Mucosa of descending colon (tissue), 3 donors: ENCODE measurements at regions of chr1 and their contacts with region 1.

Region 1: GRCh38 chr1:153985941-153986761 is at the start of gene RAB13:
- DNase-seq: peak; percentile 86 to 92 (median 90)
- ATAC-seq: peak; percentile 84
- H3K4me3 ChIP-seq: no peak within 1 kb of the TSS
- H3K4me1 ChIP-seq: peaks cover 7% of the 10 kb centered on the region
- CTCF ChIP-seq: no peak
- total RNA-seq, gene RAB13: 55.4 to 82.5 (median 77.5) TPM

Region 2: GRCh38 chr1:153459655-153460054 is 526.5 kb before region 1 on chr1:
- intact Hi-C with region 1: no loop called
- DNase-seq: no peak
- ATAC-seq: no peak
- H3K4me3 ChIP-seq: no peak overlapping the region
- H3K4me1 ChIP-seq: no peaks in the 10 kb centered on the region
- CTCF ChIP-seq: no peak

Region 3: DNA sequence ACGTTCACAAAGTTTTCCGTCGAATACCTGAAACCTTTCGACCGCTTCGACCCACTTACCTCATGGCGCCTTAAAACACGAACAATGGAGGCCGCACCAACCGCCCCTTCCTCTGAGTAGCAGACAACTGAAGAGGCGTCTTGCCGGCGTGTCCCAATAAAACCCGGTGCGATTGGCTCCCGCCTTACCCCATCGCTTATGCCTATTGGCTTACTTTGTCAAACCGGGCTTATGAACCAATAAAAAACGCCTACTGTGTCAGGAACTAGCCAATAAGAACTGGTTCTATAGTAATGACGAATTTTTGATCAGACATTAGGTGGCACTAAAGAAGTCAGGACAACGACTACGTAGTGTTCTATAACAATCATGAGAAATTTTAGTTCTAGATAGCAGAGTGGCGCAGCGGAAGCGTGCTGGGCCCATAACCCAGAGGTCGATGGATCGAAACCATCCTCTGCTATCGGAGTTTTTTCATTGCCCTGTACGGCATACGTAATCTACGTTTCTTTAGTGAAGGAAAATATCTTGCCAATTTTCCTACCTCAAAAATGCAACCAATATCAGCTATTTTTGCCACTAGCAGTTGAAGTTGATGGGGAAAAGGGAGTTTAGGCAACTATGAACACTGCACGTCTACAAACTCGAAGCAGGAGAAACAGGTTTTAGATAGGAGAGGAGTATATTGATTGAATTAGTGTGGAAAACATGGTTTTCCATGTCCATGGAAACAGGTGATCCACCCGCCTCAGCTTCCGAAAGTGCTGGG is 315.1 kb before region 1 on chr1 and contains the start of gene ILF2:
- intact Hi-C with region 1: loop called in 1 of 2 experiments (anchors 10 kb)
- DNase-seq: peak; percentile 98
- ATAC-seq: peak; percentile 95
- H3K4me3 ChIP-seq: peak within 1 kb of the TSS; percentile 41
- H3K4me1 ChIP-seq: peaks cover 22% of the 10 kb centered on the region
- CTCF ChIP-seq: no peak
- total RNA-seq, gene ILF2: 78.4 to 126 (median 81.3) TPM

Region 4: GRCh38 chr1:153796791-153797659 is 189.1 kb before region 1 on chr1:
- intact Hi-C with region 1: loop called (anchors 5 to 10 kb)
- DNase-seq: peak; percentile 60 to 98 (median 71)
- ATAC-seq: peak; percentile 88
- H3K4me3 ChIP-seq: no peak overlapping the region
- H3K4me1 ChIP-seq: peaks cover 4% of the 10 kb centered on the region
- CTCF ChIP-seq: peak; percentile 76

Region 5: DNA sequence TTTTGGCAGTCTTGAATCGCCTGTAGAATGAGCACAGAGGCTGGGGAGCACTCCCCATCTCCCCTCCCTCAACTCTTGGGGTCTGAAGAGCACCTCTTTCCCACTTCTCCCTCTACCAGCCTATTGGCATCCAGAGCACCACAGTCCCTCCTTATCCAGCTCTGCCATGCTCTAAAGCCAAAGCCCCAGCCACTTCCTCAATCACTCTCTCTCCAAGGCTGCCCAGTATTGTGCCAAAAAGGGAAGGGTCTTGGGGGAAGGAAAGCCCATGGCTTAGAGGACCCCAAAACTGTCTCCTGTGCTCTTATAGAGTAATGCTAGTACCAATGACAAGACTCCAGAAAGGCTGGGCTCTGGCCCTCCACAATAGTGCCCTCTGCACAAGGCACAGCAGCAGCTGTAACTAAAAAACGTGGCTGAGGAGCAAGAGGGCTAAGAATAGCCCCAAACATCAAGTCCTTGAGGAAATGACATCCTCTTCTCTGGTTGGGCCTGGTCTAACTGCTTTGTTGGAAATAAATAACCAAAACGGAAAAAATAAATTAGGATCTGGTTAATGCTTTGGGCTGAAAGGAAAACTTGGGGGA is 182.6 kb before region 1 on chr1:
- intact Hi-C with region 1: loop called (anchors 5 to 10 kb)
- DNase-seq: no peak
- ATAC-seq: no peak
- H3K4me3 ChIP-seq: no peak overlapping the region
- H3K4me1 ChIP-seq: no peaks in the 10 kb centered on the region
- CTCF ChIP-seq: no peak